Right ventricle myocardium superior (tissue), 1 donor: ENCODE measurements at regions of chr15 and their contacts with region 1.

Region 1: DNA sequence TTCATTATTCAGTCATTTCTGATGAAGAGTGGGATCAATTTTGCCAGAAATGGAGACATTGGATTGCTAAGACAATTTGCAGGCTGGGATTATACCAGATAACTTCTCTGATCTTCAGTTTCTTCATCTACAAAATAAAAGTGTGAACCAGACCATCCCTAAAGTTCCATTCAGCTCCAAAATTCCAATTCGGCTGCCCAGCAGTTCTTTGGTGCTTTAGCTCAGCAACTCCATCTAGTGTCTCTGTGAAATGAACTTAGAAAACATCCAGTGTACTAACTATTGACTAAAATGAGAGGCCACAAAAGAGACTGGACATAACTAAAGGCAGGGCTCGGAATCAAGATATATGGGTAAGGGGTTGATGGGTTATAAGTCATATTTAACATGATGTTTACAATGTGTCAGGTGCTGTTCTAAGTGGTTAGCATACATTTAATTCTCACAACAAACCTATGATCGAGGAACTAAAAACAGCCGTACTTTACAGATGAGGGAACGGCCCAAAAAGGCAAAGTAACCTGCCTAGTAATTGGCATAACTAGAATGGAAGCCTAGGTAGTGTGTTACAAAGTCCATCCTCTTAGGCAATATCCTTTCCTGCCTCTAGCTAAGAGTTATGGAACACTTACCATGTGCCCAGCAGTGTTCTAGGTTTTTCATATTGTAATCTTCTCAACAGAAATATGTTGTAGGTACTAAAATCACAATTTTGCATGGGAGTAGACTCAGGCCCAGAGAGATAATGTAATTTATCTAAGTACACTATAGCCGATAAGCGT is 17.0 kb downstream of the THAP10 start:
- DNase-seq: no peak
- ATAC-seq: peak; percentile 67

Region 2: DNA sequence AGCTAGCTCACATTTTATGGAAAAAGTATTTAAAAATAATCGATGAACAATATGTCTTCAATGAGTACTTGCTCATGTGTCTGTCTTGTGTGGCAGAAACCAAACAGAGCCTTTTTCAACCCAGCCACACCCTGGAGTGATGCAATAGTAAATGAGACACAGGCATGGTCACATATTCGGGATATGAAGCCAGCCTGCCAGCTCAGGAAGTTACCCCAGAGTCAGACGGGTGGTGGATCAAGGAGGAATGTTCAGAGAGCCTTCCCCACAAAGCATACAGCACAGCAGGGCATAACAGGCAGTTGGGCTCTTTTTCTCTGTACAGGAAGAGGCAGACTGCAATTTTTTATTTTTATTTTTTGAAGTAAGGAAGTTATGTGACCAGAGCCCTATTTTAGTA is 48.6 kb before region 1 on chr15:
- intact Hi-C with region 1: loop called (anchors 2 kb)
- DNase-seq: peak; percentile 64
- ATAC-seq: peak; percentile 62